Activated CD4-positive, alpha-beta memory T cell treated with anti-CD3 and anti-CD28 coated beads for 36 hours (primary cell): ENCODE measurements at regions of chr2 and their contacts with region 1.

Region 1: DNA sequence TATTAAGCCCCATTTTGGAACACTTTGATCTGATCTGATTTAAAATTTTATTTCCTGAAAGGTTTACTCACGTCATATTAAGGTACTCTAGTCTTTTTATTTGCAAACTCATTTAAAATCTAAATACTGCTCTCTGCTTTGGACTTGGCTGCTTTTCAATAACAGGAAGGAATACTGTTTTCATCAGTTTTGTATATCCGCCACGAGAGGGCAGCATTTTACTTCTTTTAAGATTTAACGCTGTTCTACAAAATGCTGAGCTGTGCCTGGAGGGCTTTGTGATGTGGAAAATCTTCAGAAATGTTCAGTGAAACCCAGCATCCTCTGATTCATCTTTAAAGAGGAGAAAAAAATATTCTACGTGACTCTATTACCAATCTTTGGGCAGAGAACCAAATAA is 37.5 kb upstream of the SLC38A11 start:
- DNase-seq: peak; percentile 30
- H3K4me3 Mint-ChIP-seq: no peak overlapping the region
- H3K27ac Mint-ChIP-seq: no peak overlapping the region
- H3K4me1 Mint-ChIP-seq: peaks cover 12% of the 10 kb centered on the region
- H3K27me3 Mint-ChIP-seq: no peaks in the 10 kb centered on the region

Region 2: DNA sequence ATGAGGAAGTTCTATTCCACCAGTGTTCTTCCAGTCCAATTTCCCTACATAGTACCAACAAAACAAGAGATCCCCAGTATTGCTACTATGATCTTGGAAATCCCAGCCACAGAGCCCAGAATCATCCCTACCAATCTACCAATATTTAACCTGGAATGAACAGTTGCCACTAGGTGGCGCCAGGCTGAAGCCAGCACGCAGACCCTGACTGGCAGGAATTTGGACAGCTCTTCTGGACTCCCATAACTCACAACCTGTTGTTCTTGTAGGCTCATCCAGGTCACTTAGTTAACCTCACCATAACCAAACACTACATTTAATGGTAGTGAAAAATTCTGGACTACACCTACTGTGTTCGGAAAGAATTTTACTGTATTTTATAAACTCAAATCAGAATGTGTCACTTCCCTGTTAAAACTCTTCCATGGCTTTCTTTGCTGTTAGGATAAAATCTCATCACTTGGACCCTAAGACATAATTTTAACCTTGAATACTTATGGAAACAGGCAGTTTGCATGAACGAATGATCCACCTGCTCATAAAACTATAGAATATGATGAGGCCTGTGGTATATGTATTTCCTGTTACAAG is 22.3 kb after region 1 on chr2:
- CTCF ChIA-PET with region 1: interaction called, 14 read pairs
- POLR2A ChIA-PET with region 1: no interaction called
- intact Hi-C with region 1: no loop called
- DNase-seq: peak; percentile 60
- H3K4me3 Mint-ChIP-seq: no peak overlapping the region
- H3K27ac Mint-ChIP-seq: no peak overlapping the region
- H3K4me1 Mint-ChIP-seq: no peaks in the 10 kb centered on the region
- H3K27me3 Mint-ChIP-seq: peaks cover 11% of the 10 kb centered on the region

Region 3: GRCh38 chr2:165055082-165055851 is 62.4 kb after region 1 on chr2:
- CTCF ChIA-PET with region 1: no interaction called
- POLR2A ChIA-PET with region 1: no interaction called
- intact Hi-C with region 1: no loop called
- DNase-seq: no peak
- H3K4me3 Mint-ChIP-seq: no peak overlapping the region
- H3K27ac Mint-ChIP-seq: no peak overlapping the region
- H3K4me1 Mint-ChIP-seq: peaks cover 3% of the 10 kb centered on the region
- H3K27me3 Mint-ChIP-seq: no peaks in the 10 kb centered on the region

Region 4: DNA sequence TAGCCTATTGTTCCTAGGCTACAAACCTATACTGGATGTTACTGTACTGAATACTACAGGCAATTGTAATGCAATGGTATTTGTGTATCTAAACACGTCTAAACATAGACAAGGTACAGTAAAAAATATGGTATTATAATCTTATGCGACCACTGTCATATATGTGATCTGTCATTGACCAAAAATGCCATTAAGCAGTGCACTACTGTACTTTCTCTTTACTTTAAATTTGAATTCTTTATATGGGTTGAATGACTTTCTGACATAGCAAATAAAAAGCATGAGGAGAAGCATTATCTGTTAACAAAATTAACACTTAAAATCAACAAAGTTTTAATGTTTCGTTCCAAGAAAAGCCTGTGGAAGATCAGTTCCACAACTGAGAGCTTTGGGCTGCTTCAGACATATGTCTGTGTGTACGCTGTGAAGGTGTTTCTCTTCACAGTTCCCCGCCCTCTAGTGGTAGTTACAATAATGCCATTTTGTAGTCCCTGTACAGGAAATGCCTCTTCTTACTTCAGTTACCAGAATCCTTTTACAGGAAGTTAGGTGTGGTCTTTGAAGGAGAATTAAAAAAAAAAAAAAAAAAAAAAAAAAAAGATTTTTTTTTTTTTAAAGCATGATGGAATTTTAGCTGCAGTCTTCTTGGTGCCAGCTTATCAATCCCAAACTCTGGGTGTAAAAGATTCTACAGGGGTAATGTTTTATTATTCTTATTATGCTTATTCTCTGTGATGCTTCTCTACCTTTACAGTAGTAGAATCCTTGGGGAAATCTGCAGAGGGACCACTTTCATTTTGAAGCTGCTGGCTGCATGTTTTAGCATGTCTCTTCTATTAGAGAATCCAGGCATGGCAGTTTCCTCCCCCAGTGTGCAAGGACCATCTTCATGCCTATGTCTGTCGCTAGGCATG is 300.9 kb after region 1 on chr2:
- CTCF ChIA-PET with region 1: interaction called, 4 read pairs
- POLR2A ChIA-PET with region 1: no interaction called
- intact Hi-C with region 1: loop called (anchors 1 kb)
- DNase-seq: no peak
- H3K4me3 Mint-ChIP-seq: no peak overlapping the region
- H3K27ac Mint-ChIP-seq: no peak overlapping the region
- H3K4me1 Mint-ChIP-seq: peaks cover 2% of the 10 kb centered on the region
- H3K27me3 Mint-ChIP-seq: peaks cover 4% of the 10 kb centered on the region

Region 5: DNA sequence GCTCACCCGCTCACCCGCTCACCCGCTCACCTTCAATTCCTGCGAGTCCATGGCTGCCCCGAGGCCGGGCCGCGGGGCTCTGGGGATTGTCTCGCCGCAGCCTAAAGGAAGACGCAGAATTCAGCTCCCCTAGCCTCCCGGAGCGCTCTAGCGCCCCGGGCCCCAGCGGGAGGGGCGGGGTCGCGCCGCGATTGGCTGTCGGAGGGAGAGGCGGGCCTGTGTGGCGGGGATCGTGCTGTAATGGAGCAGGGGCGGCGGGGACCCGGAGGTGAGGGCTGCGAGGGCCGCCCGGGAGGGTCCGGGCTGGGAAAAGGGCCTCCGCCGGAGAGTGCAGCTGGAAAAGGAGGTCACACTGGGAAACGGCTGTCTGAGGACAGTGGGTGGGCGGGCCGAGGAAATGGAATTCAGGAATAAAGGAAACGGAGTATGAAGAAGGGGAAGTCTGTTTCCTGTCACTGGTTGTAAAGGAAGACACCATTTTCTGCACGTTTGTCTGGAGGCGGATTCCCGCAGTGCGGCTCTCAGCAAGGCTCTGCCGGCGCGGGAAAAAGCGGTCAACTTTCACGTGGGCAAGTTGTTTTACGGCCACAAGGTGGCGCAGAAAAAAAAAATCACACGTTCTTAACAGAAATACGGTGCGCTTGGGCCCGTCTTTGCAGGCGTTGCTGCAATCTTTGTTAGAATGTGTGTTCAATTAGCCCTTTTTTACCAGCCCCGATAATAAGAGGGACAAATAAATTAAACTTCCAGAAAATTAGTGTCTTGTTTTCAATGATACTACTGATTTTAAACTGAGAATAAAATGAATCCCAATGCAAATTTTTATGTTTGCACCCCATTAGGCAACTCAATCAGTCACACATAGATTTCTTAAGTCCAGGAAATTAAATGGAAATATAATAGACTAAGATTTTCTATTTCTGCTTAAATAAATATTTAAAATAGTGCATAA is 961.1 kb after region 1 on chr2 and contains the start of gene TTC21B:
- CTCF ChIA-PET with region 1: no interaction called
- POLR2A ChIA-PET with region 1: no interaction called
- intact Hi-C with region 1: loop called (anchors 5 kb)
- DNase-seq: peak; percentile 95
- H3K4me3 Mint-ChIP-seq: peak within 1 kb of the TSS; percentile 28
- H3K27ac Mint-ChIP-seq: no peak within 1 kb of the TSS
- H3K4me1 Mint-ChIP-seq: peaks cover 18% of the 10 kb centered on the region
- H3K27me3 Mint-ChIP-seq: no peaks in the 10 kb centered on the region
- total RNA-seq, gene TTC21B: 20.0 to 21.3 TPM